H1 (cell line): ENCODE measurements at regions of chr7 and their contacts with region 1.

Region 1: GRCh38 chr7:128209229-128210035 is 31.6 kb upstream of the LEP start:
- DNase-seq: peak; percentile 53 to 82
- H3K4me3 ChIP-seq: no peak overlapping the region
- H3K27ac ChIP-seq: no peak overlapping the region
- H3K4me1 ChIP-seq: peaks cover 6 to 16% (median 7%) of the 10 kb centered on the region in 4 experiments; a peak in 6 of 7 replicates
- H3K27me3 ChIP-seq: peaks cover 0 to 10% (median 5%) of the 10 kb centered on the region in 4 experiments; a peak in 3 of 7 replicates
- CTCF ChIP-seq: peak; percentile 99 to 100 (median 100)
- EP300 ChIP-seq: no peak
- POLR2A ChIP-seq: no peak
- RAD21 ChIP-seq: peak; percentile 100

Region 2: GRCh38 chr7:128020159-128020558 is 189.3 kb before region 1 on chr7:
- CTCF ChIA-PET with region 1: interaction called, 36 read pairs
- POLR2A ChIA-PET with region 1: no interaction called
- DNase-seq: peak in 1 of 2 experiments; percentile 89
- H3K4me3 ChIP-seq: no peak overlapping the region
- H3K27ac ChIP-seq: no peak overlapping the region
- H3K4me1 ChIP-seq: peaks cover 11 to 27% (median 19%) of the 10 kb centered on the region in 4 experiments
- H3K27me3 ChIP-seq: no peaks in the 10 kb centered on the region
- CTCF ChIP-seq: peak; percentile 78 to 99 (median 84)
- EP300 ChIP-seq: no peak
- POLR2A ChIP-seq: no peak
- RAD21 ChIP-seq: peak; percentile 52 to 72

Region 3: GRCh38 chr7:128076796-128077271 is 132.6 kb before region 1 on chr7:
- CTCF ChIA-PET with region 1: interaction called, 135 read pairs
- POLR2A ChIA-PET with region 1: no interaction called
- DNase-seq: no peak
- H3K4me3 ChIP-seq: no peak overlapping the region
- H3K27ac ChIP-seq: no peak overlapping the region
- H3K4me1 ChIP-seq: peaks cover 0 to 8% (median 0%) of the 10 kb centered on the region in 4 experiments; a peak in 3 of 7 replicates
- H3K27me3 ChIP-seq: no peaks in the 10 kb centered on the region
- CTCF ChIP-seq: no peak
- EP300 ChIP-seq: no peak
- POLR2A ChIP-seq: no peak
- RAD21 ChIP-seq: no peak

Region 4: DNA sequence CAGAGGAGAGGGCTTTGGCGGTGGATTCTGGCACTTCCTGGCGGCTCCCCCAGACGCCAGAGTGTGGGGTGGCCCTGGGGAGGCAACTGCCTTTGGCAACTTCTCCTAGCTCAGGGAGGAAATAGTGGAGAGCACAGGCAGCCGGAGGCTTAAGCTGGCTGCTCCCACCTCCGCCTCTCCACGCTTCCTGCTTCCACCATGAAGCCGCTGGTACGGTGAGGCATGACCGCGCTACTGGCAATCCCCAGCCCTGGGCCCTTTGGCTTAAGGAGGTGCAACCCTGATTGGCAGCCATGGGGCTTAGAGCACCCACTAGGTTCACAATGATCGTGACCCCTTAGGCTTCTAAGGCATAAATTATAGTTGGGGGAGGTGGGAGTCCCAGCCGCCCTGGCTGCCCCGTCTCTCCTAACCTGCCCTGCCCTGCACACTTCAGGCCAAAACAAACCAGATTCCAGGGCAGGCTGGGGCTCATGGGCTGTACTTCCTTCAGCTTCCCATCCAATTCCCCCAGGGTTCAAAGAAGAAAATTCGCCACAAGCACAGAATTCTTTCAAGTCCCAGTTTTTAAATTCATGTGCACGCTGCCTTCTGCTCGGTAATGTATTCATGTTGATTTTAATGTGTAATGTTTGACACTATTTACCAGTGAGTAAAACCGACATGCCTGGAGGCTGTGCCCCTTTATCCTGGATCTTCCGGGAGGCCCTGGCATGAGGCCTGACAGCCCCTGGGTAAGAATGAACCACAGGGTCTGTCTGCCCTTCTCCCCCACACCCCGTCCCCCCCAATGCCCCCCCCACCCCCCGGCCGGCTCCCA is 87.5 kb before region 1 on chr7:
- CTCF ChIA-PET with region 1: interaction called, 347 read pairs
- POLR2A ChIA-PET with region 1: no interaction called
- DNase-seq: no peak
- H3K4me3 ChIP-seq: no peak overlapping the region
- H3K27ac ChIP-seq: no peak overlapping the region
- H3K4me1 ChIP-seq: peaks cover 3 to 8% (median 4%) of the 10 kb centered on the region in 4 experiments; a peak in 6 of 7 replicates
- H3K27me3 ChIP-seq: peaks cover 0 to 4% (median 2%) of the 10 kb centered on the region in 4 experiments; a peak in 3 of 7 replicates
- CTCF ChIP-seq: no peak
- EP300 ChIP-seq: no peak
- POLR2A ChIP-seq: no peak
- RAD21 ChIP-seq: no peak

Region 5: DNA sequence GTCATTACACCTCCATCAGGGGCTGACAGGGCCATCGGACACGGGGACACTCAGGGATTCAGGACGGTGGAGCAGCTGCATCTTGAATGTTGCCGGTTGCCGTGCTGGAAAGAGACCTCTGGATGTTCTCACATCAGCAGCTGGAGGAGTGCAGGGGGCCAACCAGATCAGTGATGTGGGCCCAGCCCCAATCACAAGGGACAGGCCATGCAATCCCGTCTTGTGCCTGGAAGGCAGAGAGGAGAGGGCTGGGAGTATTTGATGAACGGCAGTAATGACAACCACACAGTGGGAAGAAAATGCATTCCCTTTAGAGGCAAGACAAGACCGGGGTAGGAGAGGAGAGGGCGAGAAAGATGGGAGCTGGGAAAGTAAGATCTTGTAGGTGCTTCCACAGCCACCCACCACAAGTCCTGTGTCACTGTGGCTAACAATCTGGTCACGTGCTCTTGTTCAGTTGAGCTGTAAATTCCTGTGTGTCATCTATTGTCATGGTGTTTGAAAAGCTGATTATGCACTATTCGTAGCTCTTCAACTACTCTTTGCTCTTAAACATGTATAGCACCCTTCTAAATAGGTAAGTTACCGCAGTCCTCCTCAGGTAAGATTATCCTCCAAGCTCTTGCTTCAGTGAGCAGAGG is 54.2 kb before region 1 on chr7:
- CTCF ChIA-PET with region 1: interaction called, 85 read pairs
- POLR2A ChIA-PET with region 1: no interaction called
- DNase-seq: no peak
- H3K4me3 ChIP-seq: no peak overlapping the region
- H3K27ac ChIP-seq: no peak overlapping the region
- H3K4me1 ChIP-seq: peaks cover 8 to 11% (median 9%) of the 10 kb centered on the region in 4 experiments
- H3K27me3 ChIP-seq: peaks cover 0 to 2% (median 0%) of the 10 kb centered on the region in 4 experiments; a peak in 3 of 7 replicates
- CTCF ChIP-seq: no peak
- EP300 ChIP-seq: no peak
- POLR2A ChIP-seq: no peak
- RAD21 ChIP-seq: no peak

Region 6: GRCh38 chr7:128190051-128190647 is 19.3 kb before region 1 on chr7:
- CTCF ChIA-PET with region 1: interaction called, 57 read pairs
- POLR2A ChIA-PET with region 1: no interaction called
- DNase-seq: peak in 1 of 2 experiments; percentile 34
- H3K4me3 ChIP-seq: no peak overlapping the region
- H3K27ac ChIP-seq: no peak overlapping the region
- H3K4me1 ChIP-seq: peaks cover 0 to 8% (median 2%) of the 10 kb centered on the region in 4 experiments; a peak in 3 of 7 replicates
- H3K27me3 ChIP-seq: no peaks in the 10 kb centered on the region; a peak in 2 of 7 replicates
- CTCF ChIP-seq: no peak
- EP300 ChIP-seq: no peak
- POLR2A ChIP-seq: no peak
- RAD21 ChIP-seq: no peak

Region 7: DNA sequence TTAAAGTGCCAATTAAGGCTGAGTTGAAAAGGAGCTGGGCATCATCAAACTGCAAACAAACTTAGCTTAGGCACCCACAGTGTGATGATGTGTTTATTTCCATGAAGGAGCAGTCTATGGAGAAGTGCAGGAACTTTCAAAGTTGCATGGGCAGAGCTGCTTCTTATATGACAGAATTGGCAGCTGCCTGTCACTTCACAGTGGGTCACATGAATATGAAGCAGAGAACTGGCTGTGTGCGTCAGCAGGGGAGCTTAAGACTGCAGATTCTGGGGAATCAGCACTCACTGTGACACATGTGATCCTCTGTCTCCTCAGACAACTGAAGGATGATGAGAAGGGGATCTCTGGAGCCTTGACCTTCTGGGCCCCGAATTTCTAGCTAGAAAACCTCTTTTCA is 97.6 kb after region 1 on chr7:
- CTCF ChIA-PET with region 1: no interaction called
- POLR2A ChIA-PET with region 1: no interaction called
- DNase-seq: no peak
- H3K4me3 ChIP-seq: no peak overlapping the region
- H3K27ac ChIP-seq: no peak overlapping the region
- H3K4me1 ChIP-seq: no peaks in the 10 kb centered on the region
- H3K27me3 ChIP-seq: no peaks in the 10 kb centered on the region
- CTCF ChIP-seq: no peak
- EP300 ChIP-seq: no peak
- POLR2A ChIP-seq: no peak
- RAD21 ChIP-seq: no peak

Region 8: DNA sequence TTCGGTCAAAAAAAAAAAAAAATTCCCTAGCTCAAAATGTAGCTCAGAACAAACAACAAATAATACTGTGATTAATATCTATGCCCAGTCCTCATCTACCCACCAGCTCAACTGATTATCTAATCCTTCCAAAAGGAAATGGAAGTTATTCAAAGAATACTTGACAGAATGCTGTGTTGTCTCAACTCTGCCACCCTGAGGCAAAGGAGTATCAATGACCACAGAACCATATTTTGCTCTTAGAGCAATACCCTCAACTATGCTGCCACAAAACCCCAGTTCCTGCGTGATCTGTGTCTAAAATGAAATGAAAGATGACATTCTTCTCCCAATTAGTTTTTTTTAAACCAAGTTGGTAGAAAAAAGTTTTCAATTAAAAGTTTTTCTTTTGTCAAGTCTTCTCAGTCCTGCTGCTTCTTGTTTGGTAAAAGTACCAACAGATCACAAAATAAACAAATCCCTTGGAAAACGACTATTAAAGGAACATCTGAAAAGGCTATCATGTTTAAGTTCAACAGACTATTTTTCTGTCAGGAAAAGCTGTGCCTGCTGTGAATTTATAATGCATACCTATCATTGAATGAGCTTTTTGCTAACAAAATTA is 112.7 kb after region 1 on chr7:
- CTCF ChIA-PET with region 1: interaction called, 22 read pairs
- POLR2A ChIA-PET with region 1: no interaction called
- DNase-seq: no peak
- H3K4me3 ChIP-seq: no peak overlapping the region
- H3K27ac ChIP-seq: no peak overlapping the region
- H3K4me1 ChIP-seq: no peaks in the 10 kb centered on the region
- H3K27me3 ChIP-seq: no peaks in the 10 kb centered on the region
- CTCF ChIP-seq: peak in 2 of 3 experiments; percentile 50 to 54; a peak in 2 of 4 replicates
- EP300 ChIP-seq: no peak
- POLR2A ChIP-seq: no peak
- RAD21 ChIP-seq: peak; percentile 69 to 70